GM23248 (cell line): ENCODE measurements at regions of chr2 and their contacts with region 1.

Region 1: GRCh38 chr2:235135990-235136561 is 184.3 kb downstream of the SH3BP4 start:
- DNase-seq: peak; percentile 94
- H3K4me3 ChIP-seq: no peak overlapping the region
- H3K27ac ChIP-seq: no peak overlapping the region
- H3K4me1 ChIP-seq: no peaks in the 10 kb centered on the region
- H3K27me3 ChIP-seq: no peaks in the 10 kb centered on the region

Region 2: DNA sequence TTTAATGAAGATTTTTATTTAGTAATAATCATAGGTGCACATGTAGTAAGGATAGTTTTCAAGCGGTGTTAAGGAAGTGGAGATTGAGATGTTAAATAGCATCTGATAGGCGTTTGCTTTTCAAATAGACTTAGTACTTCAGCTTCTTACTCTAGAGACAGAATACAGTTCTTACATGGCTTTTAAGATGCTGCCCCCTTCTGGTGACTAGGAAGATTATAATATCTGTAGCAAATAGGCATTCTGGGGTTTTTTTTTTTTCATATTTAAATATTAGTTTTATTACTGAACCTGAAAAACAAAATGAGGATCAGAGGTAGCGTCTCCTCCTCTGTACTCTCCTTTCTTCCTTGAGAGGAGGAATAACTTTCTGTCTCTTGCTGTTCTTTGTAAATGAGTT is 458.0 kb after region 1 on chr2:
- in situ Hi-C with region 1: loop called (anchors 5 kb)
- DNase-seq: peak; percentile 86
- H3K4me3 ChIP-seq: no peak overlapping the region
- H3K27ac ChIP-seq: no peak overlapping the region
- H3K4me1 ChIP-seq: no peaks in the 10 kb centered on the region
- H3K27me3 ChIP-seq: no peaks in the 10 kb centered on the region

Region 3: DNA sequence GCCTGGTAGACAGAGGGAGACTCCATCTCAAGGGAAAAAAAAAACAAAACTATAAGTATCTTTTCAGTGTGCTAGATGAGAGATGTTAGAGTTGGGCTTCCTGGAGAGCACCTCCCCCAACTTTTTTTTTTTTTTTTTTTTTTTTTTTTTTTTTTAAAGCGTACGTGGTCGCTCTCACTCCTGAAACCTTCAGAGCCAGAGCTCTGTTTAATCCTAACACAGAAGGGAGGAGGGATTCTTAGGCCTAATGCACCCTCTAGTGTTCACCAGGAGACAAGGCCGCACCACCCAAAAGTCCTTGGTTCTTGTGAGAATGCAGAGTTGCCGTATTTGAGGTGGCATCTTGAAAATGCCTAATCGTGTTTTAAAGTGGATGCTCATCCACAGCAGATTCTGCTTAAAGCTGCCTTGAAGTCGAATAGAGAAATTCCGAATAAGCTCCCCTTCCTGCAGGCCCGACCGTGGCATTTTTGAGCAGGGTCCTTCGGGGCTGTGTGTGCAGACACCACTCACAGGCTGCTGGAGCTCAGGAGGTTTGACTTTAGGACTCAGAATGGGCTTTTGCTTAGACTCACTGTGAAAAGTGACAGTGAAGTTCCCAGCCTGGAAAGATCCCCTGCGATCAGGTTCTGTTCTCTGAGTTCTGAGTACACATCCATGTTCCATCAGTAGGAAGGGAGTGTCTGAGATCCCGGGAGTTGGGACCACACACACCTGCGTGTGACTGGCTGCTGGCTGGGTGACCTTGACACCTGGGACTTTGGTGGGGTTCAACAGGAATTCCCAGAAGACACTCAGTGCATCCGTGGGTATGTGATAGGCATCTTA is 610.4 kb after region 1 on chr2:
- in situ Hi-C with region 1: loop called (anchors 10 kb)
- DNase-seq: peak; percentile 93
- H3K4me3 ChIP-seq: no peak overlapping the region
- H3K27ac ChIP-seq: no peak overlapping the region
- H3K4me1 ChIP-seq: peaks cover 17% of the 10 kb centered on the region
- H3K27me3 ChIP-seq: no peaks in the 10 kb centered on the region

Region 4: DNA sequence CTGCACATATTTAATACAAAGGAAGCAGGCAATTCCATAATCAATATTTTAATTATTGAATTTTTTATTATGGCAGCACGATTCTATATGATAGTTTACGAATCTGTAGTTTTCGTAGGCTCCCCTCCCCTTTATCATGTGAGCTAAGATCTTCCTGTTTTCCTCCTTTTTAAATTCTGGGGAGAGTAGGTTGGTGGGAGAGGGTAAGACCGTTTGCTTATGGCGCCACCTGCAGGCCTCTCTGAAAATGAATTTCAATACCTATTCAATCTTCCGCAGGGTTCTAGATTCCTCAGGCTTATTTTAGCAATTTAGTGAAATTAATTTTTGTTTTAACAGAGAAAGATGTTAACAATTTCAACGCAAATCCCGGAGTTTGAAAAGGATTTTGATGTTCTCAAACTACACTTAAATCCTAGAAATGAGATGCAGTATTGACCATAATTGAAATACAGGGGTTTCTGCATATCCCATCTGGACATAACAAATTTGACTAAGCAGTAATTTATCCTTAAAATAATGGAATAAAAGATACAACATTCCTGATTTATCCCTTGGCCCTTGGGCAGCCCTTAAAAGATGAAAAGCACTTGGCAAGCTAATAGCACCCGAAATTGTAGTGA is 1044.9 kb after region 1 on chr2:
- in situ Hi-C with region 1: loop called (anchors 25 kb)
- DNase-seq: peak; percentile 65
- H3K4me3 ChIP-seq: no peak overlapping the region
- H3K27ac ChIP-seq: no peak overlapping the region
- H3K4me1 ChIP-seq: peaks cover 21% of the 10 kb centered on the region; the same call in 1 of the 2 replicates
- H3K27me3 ChIP-seq: peaks cover 17% of the 10 kb centered on the region; the same call in 1 of the 2 replicates